Cardiac septum (tissue), 1 donor: ENCODE measurements at regions of chr6 and their contacts with region 1.

Region 1: GRCh38 chr6:46954837-46955451 is 33.2 kb upstream of the ADGRF5 start:
- DNase-seq: no peak

Region 2: DNA sequence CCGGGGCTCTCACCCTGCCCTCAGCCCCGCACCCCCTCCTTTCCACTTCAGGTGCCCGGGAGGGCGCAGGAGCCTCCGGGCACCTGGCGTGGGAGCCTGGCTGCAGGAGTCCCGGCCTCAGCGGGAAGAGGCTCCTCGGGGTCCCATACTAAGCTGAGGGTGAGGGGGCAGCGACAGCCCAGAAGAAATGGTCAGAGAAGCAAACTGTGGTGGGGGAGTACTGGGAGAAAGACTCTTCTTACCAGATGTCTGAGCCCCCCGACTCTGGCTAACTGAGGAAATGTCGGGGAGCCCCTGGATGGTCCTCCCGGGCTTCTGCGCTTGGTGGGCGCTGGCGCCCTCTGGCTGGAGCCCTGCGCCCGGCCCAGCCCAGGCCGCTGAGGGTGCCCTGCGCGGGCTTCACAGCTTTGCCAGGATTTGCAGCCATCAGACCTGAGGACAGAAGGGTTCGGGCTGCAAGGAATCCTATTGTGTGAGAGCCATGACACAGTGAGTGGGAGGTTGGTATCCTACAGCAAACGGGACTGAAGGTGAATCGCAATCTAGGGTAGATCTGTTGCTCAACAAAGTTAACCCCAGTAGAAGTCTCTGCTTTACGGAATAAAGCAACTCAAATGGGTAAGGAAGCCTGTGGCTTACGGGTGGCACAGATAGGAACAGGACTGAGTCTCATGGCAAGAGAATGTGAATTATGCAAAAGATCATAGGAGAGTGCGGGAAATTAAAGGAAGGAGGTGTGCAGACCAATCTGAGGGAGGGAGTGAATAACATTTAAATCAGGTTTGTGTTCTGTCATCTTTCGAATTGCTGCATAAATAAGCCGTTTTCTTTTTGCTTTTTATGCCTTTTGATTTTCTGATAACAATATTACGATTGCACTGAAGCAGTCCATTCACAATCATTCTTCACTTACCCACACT is 463.1 kb before region 1 on chr6:
- intact Hi-C with region 1: no loop called
- DNase-seq: peak; percentile 84

Region 3: DNA sequence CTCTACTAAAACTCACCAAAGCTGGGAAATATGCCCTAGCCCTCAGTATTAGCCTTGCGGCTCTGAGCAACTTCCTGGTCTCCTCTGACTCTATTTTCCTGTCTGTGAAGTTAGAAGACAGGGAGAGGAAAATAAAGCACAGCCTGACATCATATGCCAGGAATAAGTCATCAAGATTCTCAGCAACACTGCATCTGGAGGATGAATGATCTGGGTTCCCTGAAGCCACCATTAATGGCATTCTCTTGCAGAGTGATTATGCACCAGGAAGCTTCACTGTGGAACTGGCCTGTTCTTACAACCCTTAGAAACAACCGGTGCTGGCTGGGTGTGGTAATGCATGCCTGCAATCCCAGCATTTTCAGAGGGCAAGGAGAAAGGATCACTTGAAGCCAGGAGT is 45.6 kb before region 1 on chr6:
- intact Hi-C with region 1: loop called (anchors 5 kb)
- DNase-seq: no peak

Region 4: GRCh38 chr6:47000842-47001241 is 45.9 kb after region 1 on chr6:
- intact Hi-C with region 1: no loop called
- DNase-seq: no peak

Region 5: GRCh38 chr6:47221565-47221964 is 266.6 kb after region 1 on chr6:
- intact Hi-C with region 1: no loop called
- DNase-seq: no peak